Esophagus muscularis mucosa (tissue), 4 donors: ENCODE measurements at regions of chr5 and their contacts with region 1.

Region 1: DNA sequence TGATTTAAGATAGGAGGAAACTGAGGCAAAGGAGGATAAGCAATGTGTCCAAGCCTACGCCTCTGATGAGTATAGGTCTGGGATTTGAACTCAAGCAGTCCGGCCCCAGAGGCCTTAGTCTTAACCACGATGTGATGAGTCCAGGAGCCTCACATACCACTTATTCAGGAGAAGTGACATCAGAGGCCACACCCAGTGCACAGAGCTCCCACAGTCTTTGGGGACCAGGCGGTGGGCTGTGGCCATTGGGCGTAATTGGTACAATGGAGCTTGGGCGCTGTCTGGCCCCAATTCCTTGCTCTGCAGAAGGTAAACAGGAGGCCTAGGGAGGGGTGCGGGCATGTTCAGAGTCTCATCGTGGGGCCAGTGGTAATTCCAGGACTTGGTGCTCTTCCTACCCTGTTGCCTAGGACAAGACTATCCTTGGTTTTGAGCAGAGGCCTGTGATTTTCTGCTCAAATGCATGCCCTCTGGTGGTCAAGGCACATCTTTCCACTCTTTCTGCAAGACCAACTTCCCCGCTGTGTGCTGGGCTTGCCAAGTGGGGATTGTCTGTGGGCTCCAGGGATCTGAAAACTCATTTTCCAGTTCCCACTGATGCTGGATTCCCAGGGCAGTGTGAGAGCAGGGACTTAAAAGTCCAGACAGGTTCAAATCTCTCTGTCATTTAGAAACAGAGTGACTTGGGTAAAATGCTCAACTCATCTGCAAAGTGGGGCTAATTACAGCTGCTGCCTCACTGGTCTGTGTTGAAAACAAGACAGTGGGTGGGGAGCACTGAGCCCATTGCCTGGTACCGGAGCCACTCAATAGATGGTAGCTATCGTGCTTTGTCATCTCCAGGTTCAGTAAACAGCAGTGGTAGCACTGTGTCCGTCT is 15.8 kb downstream of the NDST1 start:
- DNase-seq: no peak
- H3K4me3 ChIP-seq: no peak overlapping the region
- H3K27ac ChIP-seq: peak overlapping the region in 3 of 4 donors; percentile 18 to 61 (median 20)
- H3K4me1 ChIP-seq: peaks cover 74 to 96% (median 88%) of the 10 kb centered on the region in 4 donors
- H3K27me3 ChIP-seq: no peaks in the 10 kb centered on the region
- CTCF ChIP-seq: peak; percentile 59 to 75 (median 64)
- EP300 ChIP-seq: no peak
- POLR2A ChIP-seq: no peak

Region 2: DNA sequence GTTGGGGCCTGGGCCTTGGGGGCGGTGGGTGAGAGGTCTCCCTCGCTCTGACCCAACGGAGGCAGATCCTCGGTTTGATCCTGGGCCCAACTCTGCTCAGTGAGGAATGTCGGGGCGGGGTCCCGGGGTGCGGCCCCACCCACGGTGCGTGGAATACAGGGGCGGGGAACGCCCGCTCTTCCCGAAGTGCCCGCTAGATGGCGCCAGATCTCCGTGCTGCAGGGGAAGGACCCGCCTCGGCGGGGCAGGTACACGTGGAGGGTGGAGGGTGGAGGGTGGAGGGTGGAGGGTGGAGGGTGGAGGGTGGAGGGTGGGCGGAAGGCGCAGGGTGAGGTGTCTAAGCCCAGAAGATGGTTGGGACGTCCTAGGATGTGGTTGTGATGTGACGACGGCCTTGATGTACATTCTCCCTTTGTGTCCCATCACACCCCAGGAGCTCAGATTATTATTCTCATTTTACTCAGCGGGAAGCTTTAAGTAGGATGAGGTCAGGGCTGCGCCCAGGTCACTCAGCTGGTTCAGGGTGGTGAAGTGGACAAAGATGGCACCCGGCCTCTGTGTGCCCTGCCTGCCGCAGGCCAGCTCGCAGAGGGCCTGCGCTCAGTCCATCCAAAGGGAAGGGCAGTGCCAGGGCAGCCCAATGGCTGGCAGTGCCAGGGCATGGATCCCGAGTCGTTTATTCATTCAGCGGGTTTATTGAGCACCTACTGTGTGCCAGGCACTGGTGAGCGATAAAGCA is 64.7 kb before region 1 on chr5:
- intact Hi-C with region 1: loop called (anchors 2 kb)
- DNase-seq: peak; percentile 94
- H3K4me3 ChIP-seq: peak overlapping the region; percentile 26 to 44 (median 35)
- H3K27ac ChIP-seq: peak overlapping the region in 1 of 4 donors; percentile 10
- H3K4me1 ChIP-seq: peaks cover 9 to 21% (median 17%) of the 10 kb centered on the region in 4 donors
- H3K27me3 ChIP-seq: no peaks in the 10 kb centered on the region
- CTCF ChIP-seq: peak; percentile 77 to 93 (median 88)
- EP300 ChIP-seq: no peak
- POLR2A ChIP-seq: no peak

Region 3: DNA sequence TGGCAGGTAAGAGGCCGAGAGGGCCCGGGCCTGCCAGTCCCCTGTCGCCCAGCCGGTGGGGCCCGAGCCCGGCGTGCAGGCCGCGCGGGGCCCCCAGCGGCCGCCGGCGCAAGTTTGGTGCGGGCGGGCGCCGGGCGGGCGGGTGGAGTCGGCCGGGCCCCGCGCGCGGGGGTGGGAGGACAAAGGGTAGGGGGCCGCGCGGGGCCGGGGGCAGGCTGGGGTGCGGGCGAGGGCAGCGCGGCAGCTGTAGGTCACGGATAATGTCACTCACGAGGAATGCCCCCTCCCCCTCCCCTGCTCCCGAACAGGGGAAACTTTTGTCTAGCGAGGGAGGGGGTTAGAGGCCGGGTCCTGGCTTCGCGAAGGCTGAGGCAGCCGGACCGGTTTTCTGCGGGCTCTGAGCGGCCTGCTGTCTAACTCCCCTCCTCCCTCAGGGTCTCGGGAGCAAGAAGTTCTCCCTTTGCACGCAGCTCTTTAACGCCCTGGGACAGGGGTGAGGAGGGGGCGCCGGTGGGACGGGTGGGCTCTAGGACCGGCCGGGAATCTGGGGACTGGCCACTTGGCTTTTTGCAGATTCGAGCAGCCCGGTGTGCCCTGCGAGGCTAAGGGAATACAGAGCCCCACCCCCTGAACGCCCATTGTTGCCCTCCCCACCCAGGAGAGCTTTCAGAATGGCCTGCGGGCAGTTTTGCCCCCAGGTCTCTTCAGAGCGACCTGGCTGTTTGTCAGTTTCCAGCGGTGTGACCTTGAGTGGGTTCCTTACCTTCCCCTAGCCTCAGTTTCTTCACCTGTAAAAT is 37.1 kb before region 1 on chr5:
- intact Hi-C with region 1: loop called (anchors 5 kb)
- DNase-seq: no peak
- H3K4me3 ChIP-seq: peak overlapping the region; percentile 97 to 99 (median 98)
- H3K27ac ChIP-seq: peak overlapping the region; percentile 95 to 97 (median 96)
- H3K4me1 ChIP-seq: peaks cover 54 to 62% (median 59%) of the 10 kb centered on the region in 4 donors
- H3K27me3 ChIP-seq: no peaks in the 10 kb centered on the region
- CTCF ChIP-seq: peak in 1 of 3 experiments; percentile 19
- EP300 ChIP-seq: no peak
- POLR2A ChIP-seq: no peak